ENCODE measurements at regions of chr10 and their contacts with region 1.

Region 1: DNA sequence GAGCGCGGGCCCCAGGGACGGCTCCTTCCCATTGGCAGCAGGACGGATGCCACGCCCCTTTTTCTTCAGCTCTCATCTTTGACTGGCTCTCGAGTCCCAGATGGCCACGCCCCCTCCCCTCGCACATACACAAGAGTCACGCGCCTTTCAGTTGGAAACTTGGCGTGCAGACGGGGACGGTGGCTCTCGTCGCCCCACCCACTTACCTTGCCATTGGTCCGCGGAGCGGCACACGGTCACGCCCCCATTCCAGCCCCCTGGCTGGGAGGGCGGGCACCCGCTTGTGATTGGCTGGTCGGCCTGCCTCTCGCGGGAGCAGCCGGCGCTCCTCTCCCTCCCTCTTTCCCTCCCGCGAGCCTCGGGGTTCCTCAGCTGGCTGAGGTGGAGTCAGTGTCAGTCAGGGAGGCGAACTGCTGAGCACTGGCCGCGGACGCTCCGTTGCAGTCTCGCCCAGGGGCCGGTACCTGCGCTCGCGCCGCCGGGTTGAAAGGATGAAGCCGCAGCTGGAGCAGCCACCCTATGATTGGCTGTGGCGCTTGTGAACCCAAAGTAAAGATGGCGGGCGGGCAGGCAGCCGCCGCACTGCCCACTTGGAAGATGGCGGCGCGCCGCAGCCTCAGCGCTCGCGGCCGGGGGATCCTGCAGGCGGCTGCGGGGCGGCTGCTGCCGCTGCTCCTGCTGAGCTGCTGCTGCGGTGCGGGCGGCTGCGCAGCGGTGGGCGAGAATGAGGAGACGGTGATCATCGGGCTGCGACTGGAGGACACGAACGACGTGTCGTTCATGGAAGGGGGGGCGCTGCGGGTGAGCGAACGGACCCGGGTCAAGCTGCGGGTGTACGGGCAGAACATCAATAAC is at the start of gene CNNM2:
- DNase-seq: peak; percentile 99 to 100
- H3K4me3 ChIP-seq: peak within 1 kb of the TSS; percentile 98
- H3K4me1 ChIP-seq: peaks cover 27% of the 10 kb centered on the region
- H3K27me3 ChIP-seq: no peaks in the 10 kb centered on the region

Region 2: DNA sequence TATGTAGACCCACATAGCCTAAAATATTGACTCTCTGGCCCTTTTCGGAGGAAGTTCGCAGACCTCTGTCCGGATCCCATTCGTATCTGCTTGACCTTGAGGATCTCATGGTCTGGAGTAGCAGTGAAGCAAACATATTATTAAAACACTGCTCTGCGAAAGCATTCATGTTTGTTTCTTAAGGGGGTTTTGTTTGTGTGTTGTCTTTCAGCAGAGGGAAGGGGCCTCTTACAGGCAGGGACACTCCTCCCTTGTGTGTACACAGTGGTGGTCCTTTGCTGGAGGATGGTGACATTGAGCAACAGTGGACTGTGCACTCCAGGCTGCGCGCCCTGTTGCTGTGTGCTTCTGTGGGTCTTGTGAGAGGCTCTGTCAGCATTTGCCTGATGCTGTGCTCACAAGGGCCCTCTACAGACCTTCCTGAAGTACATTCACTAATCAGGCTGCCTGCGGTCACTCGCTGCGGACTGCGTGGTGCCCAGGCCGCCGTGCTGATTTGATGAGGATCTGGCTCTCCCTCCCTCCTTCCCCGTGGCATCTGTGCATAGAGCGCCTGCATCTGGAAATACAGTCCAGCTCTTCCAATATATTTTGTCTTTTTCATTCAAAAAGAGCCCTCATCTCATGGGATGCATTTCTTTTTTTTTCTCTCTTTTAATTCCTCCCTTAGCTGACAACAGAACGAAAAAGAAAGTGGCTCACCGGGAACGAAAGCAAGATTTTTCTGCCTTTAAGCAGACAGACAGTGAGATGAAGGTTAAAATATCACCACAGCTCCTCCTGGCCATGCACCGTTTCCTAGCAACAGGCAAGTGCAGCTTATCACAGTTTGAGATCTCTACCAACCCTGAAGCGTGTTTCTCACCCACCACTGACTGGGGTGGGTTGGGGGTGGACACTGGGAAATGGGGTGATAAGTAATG is 135.7 kb after region 1 on chr10:
- in situ Hi-C with region 1: loop called (anchors 10 kb)
- DNase-seq: peak; percentile 46 to 62
- H3K4me3 ChIP-seq: no peak overlapping the region
- H3K4me1 ChIP-seq: no peaks in the 10 kb centered on the region
- H3K27me3 ChIP-seq: no peaks in the 10 kb centered on the region

Region 3: DNA sequence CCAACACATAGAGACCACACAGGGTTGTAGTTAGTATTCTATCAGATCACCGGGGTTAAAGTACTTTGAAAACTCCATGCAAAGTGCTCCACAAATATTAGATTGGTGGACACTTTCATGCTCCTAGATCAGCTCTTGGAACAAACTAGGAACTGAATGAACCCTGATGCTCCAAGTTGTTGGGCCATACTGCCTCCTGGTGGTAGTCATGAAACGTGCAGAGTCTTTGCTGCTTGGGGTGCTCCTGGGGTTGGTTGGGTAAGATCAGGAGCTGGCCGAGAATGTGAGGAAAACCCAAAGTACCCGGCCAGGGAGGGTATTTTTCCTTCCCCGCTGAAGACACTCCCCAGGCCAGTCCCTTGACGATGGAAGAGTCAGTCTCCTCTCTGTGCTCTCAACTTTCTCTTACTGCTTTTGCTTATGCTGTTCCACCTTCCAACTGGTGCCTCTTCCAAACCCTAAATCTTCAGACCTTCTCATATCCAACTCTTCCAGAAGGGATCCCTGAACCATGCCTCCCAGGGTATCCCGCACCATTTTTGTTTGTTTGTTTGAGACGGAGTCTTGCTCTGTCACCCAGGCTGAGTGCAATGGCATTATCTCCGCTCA is 326.6 kb after region 1 on chr10:
- in situ Hi-C with region 1: loop called (anchors 10 kb)
- DNase-seq: peak; percentile 64 to 81
- H3K4me3 ChIP-seq: no peak overlapping the region
- H3K4me1 ChIP-seq: no peaks in the 10 kb centered on the region
- H3K27me3 ChIP-seq: no peaks in the 10 kb centered on the region

Region 4: DNA sequence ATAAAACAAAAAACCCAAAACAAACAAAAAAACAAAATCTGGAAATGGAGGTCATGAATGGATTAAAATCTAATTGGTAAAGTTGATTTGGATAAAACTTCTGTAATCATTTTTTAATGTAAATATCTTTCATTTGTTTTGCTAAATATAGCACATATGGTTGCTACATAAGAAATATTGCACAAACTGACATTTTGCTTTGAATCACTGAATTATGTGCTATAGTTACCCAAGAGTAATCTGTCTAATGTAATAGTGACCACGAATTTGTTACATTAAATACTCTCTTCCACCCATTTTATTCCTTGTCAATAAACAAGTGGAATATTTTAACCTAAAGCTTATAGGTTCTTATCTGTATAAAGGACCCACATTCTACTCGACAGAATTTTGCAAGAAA is 1441.6 kb after region 1 on chr10:
- in situ Hi-C with region 1: no loop called
- DNase-seq: no peak
- H3K4me3 ChIP-seq: no peak overlapping the region
- H3K4me1 ChIP-seq: no peaks in the 10 kb centered on the region
- H3K27me3 ChIP-seq: peaks cover 19% of the 10 kb centered on the region